ENCODE measurements at regions of chr22 and their contacts with region 1.

Region 1: DNA sequence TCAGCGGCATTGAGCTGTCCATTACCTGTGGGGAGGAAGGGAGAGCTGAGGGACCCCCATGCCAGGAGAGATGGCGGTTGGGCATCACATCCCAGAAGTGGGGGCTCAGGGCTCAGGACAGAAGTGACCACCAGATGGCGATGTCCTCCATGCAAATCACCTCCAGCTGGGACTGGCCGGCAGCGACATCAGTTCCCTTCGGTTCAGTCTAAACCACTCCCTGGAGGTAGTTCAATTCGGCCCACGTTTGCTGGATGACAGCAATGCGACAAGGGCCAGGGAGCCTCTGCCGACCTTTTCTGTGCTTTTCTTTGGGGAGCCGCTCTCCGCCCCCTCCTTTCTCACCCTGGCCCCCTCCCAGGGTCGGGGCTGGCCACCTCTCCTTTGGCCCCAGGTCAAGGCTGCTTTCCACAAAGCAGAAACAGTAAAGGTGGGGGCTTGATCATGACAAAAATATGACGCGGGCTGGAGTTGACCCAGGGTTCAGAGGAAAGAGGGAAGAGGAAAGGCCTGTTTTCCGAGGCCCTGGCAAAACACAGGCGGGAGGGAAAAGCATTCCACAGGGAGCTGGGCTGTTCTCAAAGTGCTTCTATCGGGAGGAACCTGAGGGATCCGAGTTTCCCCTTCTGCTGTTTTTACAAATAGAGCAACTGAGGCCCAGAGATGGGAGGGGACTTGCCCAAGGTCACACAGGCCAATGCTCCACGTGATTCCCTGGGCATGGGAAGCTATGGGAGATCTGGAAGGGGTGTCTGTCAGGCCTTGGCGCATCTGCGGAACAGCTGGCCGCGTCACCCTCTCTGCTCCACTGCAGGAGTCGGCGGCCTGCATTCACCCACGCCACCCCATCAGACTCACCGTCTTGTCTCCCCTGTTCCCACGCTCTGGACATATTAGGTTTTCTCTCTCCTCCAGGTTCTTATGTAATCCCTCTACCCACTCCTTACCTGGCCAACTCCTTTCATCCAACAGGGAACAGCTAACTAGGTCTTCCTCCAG is 54.7 kb downstream of the FBXO7 start:
- DNase-seq: no peak
- H3K4me3 ChIP-seq: no peak overlapping the region
- H3K27me3 ChIP-seq: no peaks in the 10 kb centered on the region
- CTCF ChIP-seq: peak; percentile 84

Region 2: GRCh38 chr22:32517488-32517887 is 11.8 kb before region 1 on chr22:
- CTCF ChIA-PET with region 1: interaction called, 14 read pairs
- POLR2A ChIA-PET with region 1: no interaction called
- DNase-seq: no peak
- H3K4me3 ChIP-seq: no peak overlapping the region
- H3K27me3 ChIP-seq: no peaks in the 10 kb centered on the region
- CTCF ChIP-seq: no peak

Region 3: GRCh38 chr22:32584650-32585049 is 55.4 kb after region 1 on chr22:
- CTCF ChIA-PET with region 1: interaction called, 7 read pairs
- POLR2A ChIA-PET with region 1: interaction called, 25 read pairs
- DNase-seq: no peak
- H3K4me3 ChIP-seq: no peak overlapping the region
- H3K27me3 ChIP-seq: no peaks in the 10 kb centered on the region
- CTCF ChIP-seq: no peak

Region 4: GRCh38 chr22:33000342-33001280 is 471.3 kb after region 1 on chr22:
- CTCF ChIA-PET with region 1: interaction called, 63 read pairs
- POLR2A ChIA-PET with region 1: no interaction called
- DNase-seq: no peak
- H3K4me3 ChIP-seq: no peak overlapping the region
- H3K27me3 ChIP-seq: no peaks in the 10 kb centered on the region
- CTCF ChIP-seq: peak; percentile 95

Measured in BJ (cell line).